ENCODE measurements at regions of chr12 and their contacts with region 1.

Region 1: GRCh38 chr12:3135522-3136461 is 58.6 kb downstream of the TSPAN9 start:
- DNase-seq: peak; percentile 58 to 63
- H3K4me3 ChIP-seq: no peak overlapping the region
- H3K27ac ChIP-seq: no peak overlapping the region
- H3K4me1 ChIP-seq: peaks cover 2 to 32% (median 20%) of the 10 kb centered on the region in 4 experiments
- H3K27me3 ChIP-seq: no peaks in the 10 kb centered on the region
- CTCF ChIP-seq: peak in 2 of 3 experiments; percentile 88 to 93; a peak in 3 of 4 replicates
- EP300 ChIP-seq: no peak
- POLR2A ChIP-seq: no peak
- RAD21 ChIP-seq: peak; percentile 97 to 99

Region 2: GRCh38 chr12:2902272-2902880 is 233.4 kb before region 1 on chr12:
- CTCF ChIA-PET with region 1: no interaction called
- POLR2A ChIA-PET with region 1: no interaction called
- DNase-seq: no peak
- H3K4me3 ChIP-seq: no peak overlapping the region
- H3K27ac ChIP-seq: no peak overlapping the region
- H3K4me1 ChIP-seq: no peaks in the 10 kb centered on the region
- H3K27me3 ChIP-seq: no peaks in the 10 kb centered on the region
- CTCF ChIP-seq: no peak
- EP300 ChIP-seq: no peak
- POLR2A ChIP-seq: no peak
- RAD21 ChIP-seq: no peak

Region 3: DNA sequence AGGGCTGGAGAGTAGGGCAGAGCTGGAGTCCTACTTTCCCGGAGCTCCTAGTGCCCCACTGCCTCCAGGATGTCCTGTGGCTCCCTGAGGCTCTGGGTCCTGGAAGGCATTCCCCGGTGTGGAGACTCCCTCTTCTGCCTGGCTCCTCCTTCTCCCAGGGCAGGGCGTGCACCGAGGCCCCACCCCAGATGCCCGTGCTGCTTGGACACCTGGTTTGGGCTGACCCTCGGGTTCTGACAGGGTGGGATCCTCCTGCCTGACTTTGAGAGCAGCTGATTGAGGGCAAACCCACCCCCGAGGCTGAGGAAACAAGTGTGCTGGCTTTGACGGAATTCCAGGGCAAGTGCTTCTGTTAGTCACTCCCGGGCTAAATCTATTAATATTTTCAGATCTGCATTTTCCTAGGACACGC is 161.2 kb before region 1 on chr12:
- CTCF ChIA-PET with region 1: no interaction called
- POLR2A ChIA-PET with region 1: no interaction called
- DNase-seq: peak in 1 of 2 experiments; percentile 53
- H3K4me3 ChIP-seq: no peak overlapping the region
- H3K27ac ChIP-seq: no peak overlapping the region
- H3K4me1 ChIP-seq: peaks cover 6 to 23% (median 11%) of the 10 kb centered on the region in 4 experiments
- H3K27me3 ChIP-seq: no peaks in the 10 kb centered on the region
- CTCF ChIP-seq: no peak
- EP300 ChIP-seq: no peak
- POLR2A ChIP-seq: peak in 1 of 2 experiments; percentile 21; a peak in 1 of 3 replicates
- RAD21 ChIP-seq: no peak

Region 4: DNA sequence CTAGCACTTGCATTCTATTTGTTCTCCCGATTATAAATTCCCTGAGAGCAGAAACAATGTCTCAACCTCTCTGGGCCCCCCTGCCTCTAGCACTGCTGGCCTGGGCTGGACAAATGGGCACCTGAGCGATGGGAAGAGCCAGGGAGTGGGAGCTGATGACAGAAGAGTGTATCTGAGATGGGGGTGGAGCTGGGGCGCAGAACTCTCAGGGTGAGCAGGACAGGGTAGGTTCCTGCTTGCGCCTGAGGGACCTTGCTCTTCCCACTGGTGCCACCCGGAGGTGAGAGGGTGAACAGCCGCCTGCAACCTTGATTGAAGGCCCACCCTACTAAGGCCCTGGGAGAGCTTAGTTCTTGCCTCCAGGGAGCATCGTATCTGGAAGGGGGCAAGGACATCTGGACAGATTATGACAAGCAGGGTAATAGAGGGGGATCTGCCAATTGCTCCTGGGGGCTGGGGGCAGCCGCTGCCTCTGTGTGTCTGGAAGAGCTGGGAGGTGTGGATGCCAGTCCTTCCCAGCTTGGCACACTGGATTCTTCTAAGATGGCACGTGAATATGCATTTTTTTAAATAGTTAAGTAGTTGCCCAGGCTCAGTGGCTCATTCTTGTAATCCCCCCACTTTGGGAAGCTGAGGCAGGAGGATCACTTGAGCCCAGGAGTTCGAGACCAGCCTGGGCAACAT is 101.6 kb before region 1 on chr12:
- CTCF ChIA-PET with region 1: no interaction called
- POLR2A ChIA-PET with region 1: no interaction called
- DNase-seq: peak; percentile 54 to 92
- H3K4me3 ChIP-seq: no peak overlapping the region
- H3K27ac ChIP-seq: no peak overlapping the region
- H3K4me1 ChIP-seq: no peaks in the 10 kb centered on the region; a peak in 3 of 7 replicates
- H3K27me3 ChIP-seq: no peaks in the 10 kb centered on the region
- CTCF ChIP-seq: peak; percentile 78 to 92 (median 88)
- EP300 ChIP-seq: no peak
- POLR2A ChIP-seq: no peak
- RAD21 ChIP-seq: peak; percentile 77 to 83

Region 5: GRCh38 chr12:3122835-3123678 is 12.7 kb before region 1 on chr12:
- CTCF ChIA-PET with region 1: interaction called, 15 read pairs
- POLR2A ChIA-PET with region 1: interaction called, 3 read pairs
- DNase-seq: no peak
- H3K4me3 ChIP-seq: no peak overlapping the region
- H3K27ac ChIP-seq: no peak overlapping the region
- H3K4me1 ChIP-seq: no peaks in the 10 kb centered on the region; a peak in 1 of 7 replicates
- H3K27me3 ChIP-seq: no peaks in the 10 kb centered on the region
- CTCF ChIP-seq: no peak
- EP300 ChIP-seq: no peak
- POLR2A ChIP-seq: no peak
- RAD21 ChIP-seq: no peak

Region 6: DNA sequence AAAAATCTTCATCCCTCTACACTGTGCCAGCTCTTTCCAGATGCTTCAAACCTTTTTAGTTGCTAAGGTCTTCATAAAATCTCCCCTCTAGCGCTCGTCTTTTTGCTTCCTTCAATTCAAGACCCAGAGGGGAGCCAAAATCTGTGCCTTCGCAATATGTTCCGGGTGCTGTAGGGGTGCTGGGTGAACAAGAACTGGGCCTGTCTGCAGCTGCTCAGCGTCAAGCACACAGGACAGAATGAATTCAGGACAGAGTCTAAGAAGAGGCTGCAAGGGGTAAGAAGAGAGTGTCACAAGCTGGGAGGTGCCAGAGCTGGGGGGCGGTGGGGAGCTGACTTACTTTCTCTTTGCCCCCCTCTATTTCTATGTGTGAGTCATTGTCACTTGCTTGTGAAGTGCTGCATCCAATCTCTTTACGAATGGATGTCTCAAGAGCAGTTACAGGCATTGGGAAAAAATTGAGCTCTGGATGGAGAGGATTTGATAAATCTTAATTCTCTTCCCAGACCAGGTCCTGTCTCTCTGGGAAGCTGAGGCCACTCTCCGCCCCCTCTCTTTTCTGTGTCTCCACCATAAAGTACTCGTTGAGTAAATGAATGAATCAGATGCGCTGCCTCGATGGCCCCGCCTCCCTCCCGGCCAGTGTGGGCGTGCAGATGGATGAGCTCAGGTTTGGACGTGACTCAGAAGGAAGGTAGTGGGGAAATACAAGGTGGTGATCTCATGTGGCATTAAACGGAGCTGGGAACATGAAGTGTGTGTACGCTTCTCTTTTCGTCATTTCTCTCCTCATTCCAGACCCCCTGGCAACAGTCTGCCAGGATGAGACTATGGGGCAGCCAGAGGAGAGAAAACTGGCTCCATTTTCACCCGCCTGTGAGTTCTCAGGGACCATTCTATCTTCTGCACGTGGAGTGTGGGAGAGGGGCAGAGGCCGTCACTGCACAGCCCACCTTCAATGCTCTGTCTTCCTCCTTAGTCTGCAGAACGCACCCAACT is 32.7 kb after region 1 on chr12:
- CTCF ChIA-PET with region 1: interaction called, 8 read pairs
- POLR2A ChIA-PET with region 1: interaction called, 10 read pairs
- DNase-seq: peak in 1 of 2 experiments; percentile 33
- H3K4me3 ChIP-seq: no peak overlapping the region
- H3K27ac ChIP-seq: no peak overlapping the region
- H3K4me1 ChIP-seq: peaks cover 8 to 23% (median 19%) of the 10 kb centered on the region in 4 experiments
- H3K27me3 ChIP-seq: no peaks in the 10 kb centered on the region
- CTCF ChIP-seq: no peak
- EP300 ChIP-seq: no peak
- POLR2A ChIP-seq: no peak
- RAD21 ChIP-seq: no peak

Region 7: GRCh38 chr12:3252450-3252891 is 116.7 kb after region 1 on chr12:
- CTCF ChIA-PET with region 1: interaction called, 12 read pairs
- POLR2A ChIA-PET with region 1: no interaction called
- DNase-seq: no peak
- H3K4me3 ChIP-seq: no peak overlapping the region
- H3K27ac ChIP-seq: no peak overlapping the region
- H3K4me1 ChIP-seq: 0 out of 7 replicates have a peak, but pooled peaks cover 0 to 2% (median 0%) of the 10 kb centered on the region in 4 experiments
- H3K27me3 ChIP-seq: no peaks in the 10 kb centered on the region
- CTCF ChIP-seq: no peak
- EP300 ChIP-seq: no peak
- POLR2A ChIP-seq: no peak
- RAD21 ChIP-seq: no peak

Measured in H1 (cell line).